Pancreas (tissue), 10 donors: ENCODE measurements at regions of chr3 and their contacts with region 1.

Region 1: DNA sequence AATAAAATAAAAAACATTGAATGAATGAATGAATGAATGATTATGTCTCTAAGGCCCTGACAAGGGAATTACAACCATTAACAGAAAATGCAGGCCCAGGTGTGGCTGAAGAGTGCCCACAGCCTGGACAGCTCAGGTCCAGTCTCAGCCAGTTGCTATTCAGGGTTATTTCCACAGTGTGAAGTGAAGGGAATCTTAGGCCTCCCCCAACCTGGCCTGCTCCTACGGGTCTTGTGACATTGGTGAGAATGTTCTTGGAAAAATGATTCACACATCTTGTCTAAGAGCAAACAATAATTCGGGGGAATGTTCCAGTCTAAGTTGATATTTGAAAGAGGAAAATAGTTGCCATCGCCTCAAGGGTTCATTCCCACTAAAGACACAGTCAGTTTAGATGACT is 37.0 kb downstream of the MINDY4B start:
- DNase-seq: no peak
- ATAC-seq: peak in 1 of 4 donors; percentile 23
- H3K4me3 ChIP-seq: no peak overlapping the region
- H3K27ac ChIP-seq: no peak overlapping the region
- H3K4me1 ChIP-seq: no peaks in the 10 kb centered on the region
- H3K27me3 ChIP-seq: no peaks in the 10 kb centered on the region
- CTCF ChIP-seq: no peak

Region 2: GRCh38 chr3:150538324-150539208 is 329.7 kb before region 1 on chr3:
- intact Hi-C with region 1: loop called in 1 of 3 experiments (anchors 10 kb)
- DNase-seq: peak in 4 of 6 donors; percentile 35 to 59 (median 54)
- ATAC-seq: peak; percentile 81 to 90 (median 88)
- H3K4me3 ChIP-seq: no peak overlapping the region
- H3K27ac ChIP-seq: peak overlapping the region in 3 of 4 donors; percentile 44 to 59 (median 50)
- H3K4me1 ChIP-seq: peaks cover 41 to 52% (median 45%) of the 10 kb centered on the region in 3 donors
- H3K27me3 ChIP-seq: no peaks in the 10 kb centered on the region
- CTCF ChIP-seq: no peak

Region 3: GRCh38 chr3:150721285-150722130 is 146.8 kb before region 1 on chr3:
- intact Hi-C with region 1: loop called in 2 of 3 experiments (anchors 5 to 10 kb)
- DNase-seq: no peak
- ATAC-seq: peak; percentile 69 to 96 (median 90)
- H3K4me3 ChIP-seq: no peak overlapping the region
- H3K27ac ChIP-seq: no peak overlapping the region
- H3K4me1 ChIP-seq: no peaks in the 10 kb centered on the region
- H3K27me3 ChIP-seq: no peaks in the 10 kb centered on the region
- CTCF ChIP-seq: peak; percentile 43 to 84 (median 66)